WTC11 (cell line): ENCODE measurements at regions of chr6 and their contacts with region 1.

Region 1: DNA sequence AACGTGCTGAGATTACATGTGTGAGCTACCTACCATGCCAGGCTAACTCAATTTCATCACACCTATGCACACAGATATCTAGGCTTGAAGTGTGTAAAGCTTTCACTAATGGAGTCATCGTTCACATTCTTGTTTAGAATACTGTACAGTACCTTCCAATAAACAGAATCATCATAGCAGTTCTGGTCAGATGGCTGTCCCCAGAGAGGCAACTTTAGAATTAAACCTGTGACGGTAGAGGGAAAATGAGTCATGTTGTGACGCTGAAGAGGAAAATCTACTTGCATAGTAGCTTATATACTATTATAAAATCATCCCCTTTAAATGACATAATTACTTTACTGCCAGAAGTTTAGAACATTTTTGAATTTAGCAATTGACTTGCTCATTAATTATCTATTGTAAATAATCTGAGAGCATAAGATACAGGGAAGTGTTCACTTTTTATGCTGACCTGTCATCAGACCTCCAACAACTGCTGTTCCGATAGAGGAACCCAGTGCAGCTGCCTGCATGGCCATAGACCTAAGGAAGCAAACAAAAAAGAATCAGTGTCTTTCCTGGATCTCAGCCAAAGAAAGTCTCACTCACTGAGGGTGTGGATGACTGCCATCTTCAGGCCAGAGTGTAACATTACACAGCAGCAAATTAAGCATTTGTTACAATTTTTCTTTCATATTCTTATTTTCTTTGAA is 29.8 kb downstream of the RHAG start:
- DNase-seq: no peak
- ATAC-seq: peak; percentile 91
- H3K4me3 Mint-ChIP-seq: no peak overlapping the region
- H3K27ac Mint-ChIP-seq: no peak overlapping the region
- H3K4me1 Mint-ChIP-seq: peaks cover 27% of the 10 kb centered on the region
- H3K27me3 Mint-ChIP-seq: no peaks in the 10 kb centered on the region
- CTCF ChIP-seq: peak; percentile 71

Region 2: GRCh38 chr6:49531774-49532569 is 74.9 kb before region 1 on chr6:
- CTCF ChIA-PET with region 1: interaction called, 33 read pairs
- POLR2A ChIA-PET with region 1: no interaction called
- DNase-seq: no peak
- ATAC-seq: peak; percentile 72
- H3K4me3 Mint-ChIP-seq: peak overlapping the region; percentile 32
- H3K27ac Mint-ChIP-seq: no peak overlapping the region
- H3K4me1 Mint-ChIP-seq: peaks cover 5% of the 10 kb centered on the region
- H3K27me3 Mint-ChIP-seq: no peaks in the 10 kb centered on the region
- CTCF ChIP-seq: no peak

Region 3: DNA sequence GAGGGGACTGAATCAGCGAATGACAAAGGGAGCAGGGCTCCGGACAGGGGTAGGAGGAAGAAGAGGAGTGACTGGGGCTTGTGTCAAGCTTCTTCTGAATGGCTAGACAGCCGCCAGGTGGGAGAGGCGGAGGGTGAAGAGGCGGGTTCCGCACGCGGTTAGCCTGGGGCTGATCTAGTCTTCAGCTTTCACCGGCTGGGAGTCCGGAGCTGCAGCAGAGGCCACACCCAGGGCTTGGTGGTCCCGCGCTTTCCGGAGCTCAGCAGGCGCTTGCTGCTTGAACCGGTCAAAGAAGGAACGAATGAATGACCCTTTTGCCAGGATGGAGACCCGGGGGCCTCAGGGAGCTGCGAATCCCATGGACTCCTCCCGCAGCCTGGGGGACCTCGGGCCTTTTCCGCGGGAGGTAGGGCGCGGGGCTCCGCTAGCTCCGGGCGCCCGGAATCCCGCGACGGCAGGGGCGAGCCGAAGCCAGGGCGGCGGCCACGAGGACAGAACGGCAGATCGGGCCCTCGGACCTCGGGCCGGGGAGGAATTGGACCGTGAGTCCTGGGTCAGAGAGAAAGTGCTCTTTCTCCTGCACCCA is 56.3 kb before region 1 on chr6 and contains the start of gene C6orf141:
- CTCF ChIA-PET with region 1: interaction called, 45 read pairs
- POLR2A ChIA-PET with region 1: no interaction called
- DNase-seq: peak; percentile 83
- ATAC-seq: peak; percentile 84
- H3K4me3 Mint-ChIP-seq: peak within 1 kb of the TSS; percentile 76
- H3K27ac Mint-ChIP-seq: peak within 1 kb of the TSS; percentile 84
- H3K4me1 Mint-ChIP-seq: peaks cover 50% of the 10 kb centered on the region
- H3K27me3 Mint-ChIP-seq: peaks cover 70% of the 10 kb centered on the region
- CTCF ChIP-seq: no peak
- total RNA-seq, gene C6orf141: 6.5 to 14.4 TPM (median 8.2 TPM) in 3 replicates

Region 4: GRCh38 chr6:49625140-49625539 is 18.3 kb after region 1 on chr6:
- CTCF ChIA-PET with region 1: interaction called, 12 read pairs
- POLR2A ChIA-PET with region 1: no interaction called
- DNase-seq: no peak
- ATAC-seq: no peak
- H3K4me3 Mint-ChIP-seq: no peak overlapping the region
- H3K27ac Mint-ChIP-seq: no peak overlapping the region
- H3K4me1 Mint-ChIP-seq: no peaks in the 10 kb centered on the region
- H3K27me3 Mint-ChIP-seq: no peaks in the 10 kb centered on the region
- CTCF ChIP-seq: no peak

Region 5: GRCh38 chr6:49676696-49677281 is 69.9 kb after region 1 on chr6:
- CTCF ChIA-PET with region 1: no interaction called
- POLR2A ChIA-PET with region 1: no interaction called
- DNase-seq: no peak
- ATAC-seq: no peak
- H3K4me3 Mint-ChIP-seq: no peak overlapping the region
- H3K27ac Mint-ChIP-seq: no peak overlapping the region
- H3K4me1 Mint-ChIP-seq: no peaks in the 10 kb centered on the region
- H3K27me3 Mint-ChIP-seq: no peaks in the 10 kb centered on the region
- CTCF ChIP-seq: no peak